ENCODE measurements at regions of chr20 and their contacts with region 1.

Region 1: GRCh38 chr20:53270792-53271375 is 298.7 kb downstream of the TSHZ2 start:
- DNase-seq: no peak
- ATAC-seq: no peak
- H3K4me3 ChIP-seq: no peak overlapping the region
- H3K4me3 Mint-ChIP-seq: no peak overlapping the region
- H3K27ac ChIP-seq: no peak overlapping the region
- H3K27ac Mint-ChIP-seq: no peak overlapping the region
- H3K4me1 ChIP-seq: no peaks in the 10 kb centered on the region
- H3K4me1 Mint-ChIP-seq: no peaks in the 10 kb centered on the region
- H3K27me3 ChIP-seq: no peaks in the 10 kb centered on the region
- H3K27me3 Mint-ChIP-seq: peaks cover 7% of the 10 kb centered on the region
- CTCF ChIP-seq: no peak

Region 2: GRCh38 chr20:52923123-52923937 is 347.6 kb before region 1 on chr20:
- CTCF ChIA-PET with region 1: no interaction called
- POLR2A ChIA-PET with region 1: no interaction called
- intact Hi-C with region 1: no loop called
- DNase-seq: no peak
- ATAC-seq: no peak
- H3K4me3 ChIP-seq: no peak overlapping the region
- H3K4me3 Mint-ChIP-seq: no peak overlapping the region
- H3K27ac ChIP-seq: no peak overlapping the region
- H3K27ac Mint-ChIP-seq: no peak overlapping the region
- H3K4me1 ChIP-seq: no peaks in the 10 kb centered on the region
- H3K4me1 Mint-ChIP-seq: no peaks in the 10 kb centered on the region
- H3K27me3 ChIP-seq: no peaks in the 10 kb centered on the region
- H3K27me3 Mint-ChIP-seq: peaks cover 17% of the 10 kb centered on the region
- CTCF ChIP-seq: no peak

Region 3: DNA sequence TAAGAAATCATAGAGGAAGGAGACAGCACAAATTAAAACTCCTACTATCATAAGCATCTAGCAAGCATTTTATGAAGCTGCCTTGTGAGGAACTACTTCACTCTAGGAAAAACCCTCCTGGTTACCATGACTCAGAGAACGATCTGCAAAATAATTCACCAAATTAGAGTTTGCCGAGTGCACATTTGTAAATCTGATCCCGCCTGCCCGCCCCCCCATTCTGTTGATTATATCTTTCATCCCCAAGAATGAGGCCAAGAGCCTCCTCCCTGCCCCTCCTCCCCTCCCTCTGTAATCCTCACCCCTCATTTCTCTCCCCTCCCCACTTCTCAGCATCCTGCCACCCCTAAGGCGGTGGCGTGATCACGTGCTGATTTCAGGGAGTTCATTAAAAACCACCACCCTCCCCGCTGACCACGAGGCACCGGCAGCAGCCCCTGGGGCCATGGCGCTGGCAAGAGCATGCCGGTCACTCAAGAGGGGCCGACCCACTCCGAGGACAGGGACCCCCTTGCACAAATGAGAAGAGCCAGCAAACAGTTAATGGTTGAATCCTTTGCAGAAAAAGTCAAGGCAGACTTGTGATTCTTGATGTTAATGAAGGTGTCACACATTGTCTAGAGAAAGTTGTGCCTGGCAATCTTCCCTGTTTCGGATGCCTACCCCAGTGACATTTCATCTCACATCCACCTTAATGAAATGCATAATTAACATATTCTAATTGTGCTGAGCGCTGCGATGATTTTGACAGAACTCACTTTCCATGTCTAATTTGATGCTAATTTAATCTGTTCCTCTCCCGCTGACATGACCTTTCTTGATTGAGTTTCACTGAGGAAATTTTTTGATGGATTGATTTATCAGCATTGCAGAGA is 74.8 kb after region 1 on chr20:
- CTCF ChIA-PET with region 1: no interaction called
- POLR2A ChIA-PET with region 1: no interaction called
- intact Hi-C with region 1: loop called in 1 of 2 experiments (anchors 2 kb)
- DNase-seq: no peak
- ATAC-seq: no peak
- H3K4me3 ChIP-seq: no peak overlapping the region
- H3K4me3 Mint-ChIP-seq: no peak overlapping the region
- H3K27ac ChIP-seq: no peak overlapping the region
- H3K27ac Mint-ChIP-seq: no peak overlapping the region
- H3K4me1 ChIP-seq: no peaks in the 10 kb centered on the region
- H3K4me1 Mint-ChIP-seq: peaks cover 4% of the 10 kb centered on the region
- H3K27me3 ChIP-seq: peaks cover 0 to 2% of the 10 kb centered on the region in 2 experiments
- H3K27me3 Mint-ChIP-seq: peaks cover 13% of the 10 kb centered on the region
- CTCF ChIP-seq: no peak

Measured in CD8-positive, alpha-beta T cell (primary cell).